Heart left ventricle (tissue), 16 donors: ENCODE measurements at regions of chr4 and their contacts with region 1.

Region 1: DNA sequence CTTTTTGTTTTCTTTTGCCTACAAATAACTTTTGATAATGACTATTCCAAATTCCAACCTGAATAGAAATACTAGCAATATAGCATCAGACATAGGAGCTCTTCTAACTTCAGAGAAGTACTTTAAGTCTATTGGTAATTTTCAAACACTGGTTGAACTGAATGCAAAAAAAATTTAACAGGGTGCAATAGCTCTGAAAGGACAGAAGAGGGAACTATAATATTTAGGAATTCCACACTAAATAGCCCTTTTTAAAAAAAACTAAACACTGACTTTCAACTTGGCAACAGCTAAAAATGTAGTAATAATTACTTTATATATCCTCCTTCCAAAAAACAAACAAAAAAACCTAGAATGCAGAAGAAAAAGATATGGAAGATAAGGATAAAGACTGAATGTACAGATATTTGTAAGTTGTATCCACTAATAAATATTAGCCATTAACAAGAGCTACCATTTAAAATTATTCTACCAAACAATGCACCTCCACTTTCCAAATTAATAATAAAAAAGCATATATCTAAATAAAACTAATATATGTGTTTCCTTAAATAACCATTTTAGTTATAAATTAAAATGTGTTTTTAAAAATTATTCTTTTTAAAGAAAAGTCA is 81.4 kb downstream of the FBXW7 start:
- DNase-seq: no peak
- ATAC-seq: no peak
- H3K4me3 ChIP-seq: no peak overlapping the region
- H3K27ac ChIP-seq: no peak overlapping the region
- H3K4me1 ChIP-seq: peaks cover 0 to 15% (median 0%) of the 10 kb centered on the region in 12 donors
- H3K27me3 ChIP-seq: no peaks in the 10 kb centered on the region
- CTCF ChIP-seq: peak; percentile 27 to 70 (median 54)
- POLR2A ChIP-seq: no peak

Region 2: GRCh38 chr4:152634110-152634760 is 179.7 kb after region 1 on chr4:
- intact Hi-C with region 1: loop called in 1 of 10 experiments (anchors 5 kb)
- DNase-seq: no peak
- ATAC-seq: no peak
- H3K4me3 ChIP-seq: no peak overlapping the region
- H3K27ac ChIP-seq: no peak overlapping the region
- H3K4me1 ChIP-seq: peaks cover 0 to 15% (median 0%) of the 10 kb centered on the region in 12 donors
- H3K27me3 ChIP-seq: no peaks in the 10 kb centered on the region
- CTCF ChIP-seq: no peak
- POLR2A ChIP-seq: no peak

Region 3: DNA sequence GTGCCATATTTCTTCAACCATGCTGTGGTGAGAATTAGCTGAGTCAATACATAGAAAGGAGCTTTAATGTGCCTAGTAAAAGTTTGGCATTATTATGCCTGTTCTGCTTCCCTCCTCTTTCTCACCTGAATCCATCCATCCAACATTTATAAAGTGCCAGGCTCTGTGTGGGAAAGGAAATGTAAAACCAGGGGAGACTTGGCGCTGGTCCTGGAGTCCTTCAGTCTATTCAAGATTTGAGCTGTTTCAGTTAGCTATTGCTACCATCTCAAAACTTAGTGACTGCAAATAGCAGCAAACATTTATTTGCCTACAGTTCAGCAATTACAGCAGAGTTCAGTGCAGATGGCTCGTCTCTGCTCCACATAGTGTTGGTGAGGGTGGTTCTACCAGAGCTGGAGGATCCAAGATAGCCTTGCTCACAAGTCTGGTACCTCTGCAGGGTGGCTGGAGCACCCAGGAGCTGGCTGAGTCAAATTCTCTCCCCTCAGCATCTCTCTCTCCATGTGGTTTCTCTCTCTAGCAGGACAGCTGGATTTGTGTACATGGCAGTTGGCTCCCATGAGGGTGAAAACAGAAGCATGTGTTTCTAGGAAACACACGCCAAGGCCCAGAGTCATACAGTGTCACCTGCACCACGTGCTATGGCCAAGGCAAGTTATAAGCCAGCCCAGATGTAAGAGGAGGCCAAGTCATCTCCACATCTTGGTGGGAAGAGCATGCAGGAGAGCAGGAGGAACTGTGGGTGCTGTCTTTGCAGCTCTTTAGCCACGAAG is 558.9 kb after region 1 on chr4:
- intact Hi-C with region 1: no loop called
- DNase-seq: no peak
- ATAC-seq: no peak
- H3K4me3 ChIP-seq: no peak overlapping the region
- H3K27ac ChIP-seq: no peak overlapping the region
- H3K4me1 ChIP-seq: no peaks in the 10 kb centered on the region
- H3K27me3 ChIP-seq: no peaks in the 10 kb centered on the region
- CTCF ChIP-seq: no peak
- POLR2A ChIP-seq: no peak